ENCODE measurements at regions of chr11 and their contacts with region 1.

Region 1: DNA sequence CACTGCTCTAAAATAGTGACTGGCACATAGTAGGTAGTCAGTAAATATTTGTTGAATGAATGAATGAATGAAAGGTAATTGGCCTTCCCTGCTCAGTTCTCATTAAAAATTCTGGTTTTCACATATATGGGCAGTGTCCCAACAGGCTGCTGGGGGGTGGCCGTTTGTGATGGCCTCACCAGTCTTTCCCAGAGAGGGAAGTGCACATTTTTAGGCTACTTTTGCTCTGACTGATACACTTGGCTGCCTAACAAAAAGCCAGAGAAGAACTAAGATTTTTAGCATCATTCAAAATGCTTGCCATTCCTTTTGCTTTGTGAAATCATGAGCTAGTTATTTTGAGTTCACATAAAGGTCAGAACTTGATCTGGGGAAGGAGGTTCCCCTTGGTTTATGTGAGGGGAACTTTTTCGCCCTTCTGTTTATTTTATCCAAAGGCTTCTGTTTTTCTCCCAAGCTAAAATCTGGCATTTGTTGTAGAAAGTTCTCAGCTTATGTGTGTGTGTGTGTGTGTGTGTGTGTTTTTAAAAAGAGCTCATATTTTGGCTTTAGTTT is 83.1 kb downstream of the PTPRJ start:
- DNase-seq: peak; percentile 97
- H3K4me3 ChIP-seq: no peak overlapping the region
- H3K27ac ChIP-seq: peak overlapping the region; percentile 94
- H3K27me3 ChIP-seq: no peaks in the 10 kb centered on the region
- CTCF ChIP-seq: no peak

Region 2: GRCh38 chr11:47924184-47924691 is 139.3 kb before region 1 on chr11:
- CTCF ChIA-PET with region 1: no interaction called
- POLR2A ChIA-PET with region 1: interaction called, 10 read pairs
- DNase-seq: no peak
- H3K4me3 ChIP-seq: no peak overlapping the region
- H3K27ac ChIP-seq: peak overlapping the region; percentile 73
- H3K27me3 ChIP-seq: no peaks in the 10 kb centered on the region
- CTCF ChIP-seq: no peak

Region 3: DNA sequence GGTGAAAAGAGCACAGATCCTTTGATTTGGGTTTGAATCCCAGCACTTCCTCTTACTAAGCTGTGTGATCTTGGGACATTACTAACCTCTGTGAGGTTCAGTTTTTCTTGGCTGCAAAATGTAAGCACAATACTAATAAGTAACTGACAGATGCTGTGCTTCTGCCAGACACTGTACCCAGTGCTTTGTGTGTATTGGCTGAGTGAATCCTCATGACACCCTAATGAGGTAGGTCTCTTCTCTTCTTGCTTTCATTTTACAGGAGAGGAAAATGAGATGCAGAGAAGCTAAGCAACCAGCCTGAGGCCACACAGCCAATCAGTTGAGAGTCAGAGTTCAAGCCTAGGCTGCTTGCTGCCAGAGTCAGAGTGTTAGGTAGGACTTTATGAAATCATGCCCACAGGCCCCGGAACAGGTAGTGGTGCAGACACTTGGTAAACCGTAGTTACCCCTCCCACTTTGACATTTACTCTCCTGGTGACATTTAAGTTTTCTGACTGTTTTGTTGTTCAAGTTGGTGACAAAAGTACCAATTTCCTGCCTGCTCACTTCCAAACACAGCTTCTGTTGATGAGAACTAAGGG is 62.0 kb before region 1 on chr11:
- CTCF ChIA-PET with region 1: no interaction called
- POLR2A ChIA-PET with region 1: interaction called, 12 read pairs
- DNase-seq: peak; percentile 63
- H3K4me3 ChIP-seq: no peak overlapping the region
- H3K27ac ChIP-seq: peak overlapping the region; percentile 39
- H3K27me3 ChIP-seq: no peaks in the 10 kb centered on the region
- CTCF ChIP-seq: no peak

Region 4: DNA sequence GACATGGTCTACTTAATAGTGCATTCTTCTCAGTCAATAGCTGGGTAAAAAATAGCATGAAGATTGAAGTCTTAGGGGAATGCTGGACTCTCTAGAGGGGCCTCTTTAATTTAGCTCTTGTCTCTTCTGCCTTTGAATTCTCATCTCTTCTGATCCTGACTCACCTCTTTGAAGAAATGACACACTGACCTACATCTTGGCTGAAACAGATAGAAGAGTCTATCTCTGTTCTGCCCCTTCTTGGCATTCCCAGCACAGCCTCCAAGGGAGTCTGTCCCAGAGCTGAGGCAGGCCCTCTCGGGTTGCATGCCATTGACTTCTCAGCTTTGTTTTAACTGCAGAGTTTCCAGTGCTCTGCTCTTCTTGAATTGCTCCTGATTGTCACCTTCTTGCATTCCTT is 27.5 kb before region 1 on chr11:
- CTCF ChIA-PET with region 1: no interaction called
- POLR2A ChIA-PET with region 1: no interaction called
- DNase-seq: no peak
- H3K4me3 ChIP-seq: no peak overlapping the region
- H3K27ac ChIP-seq: no peak overlapping the region
- H3K27me3 ChIP-seq: no peaks in the 10 kb centered on the region
- CTCF ChIP-seq: no peak

Region 5: GRCh38 chr11:48052183-48053045 is 11.1 kb before region 1 on chr11:
- CTCF ChIA-PET with region 1: no interaction called
- POLR2A ChIA-PET with region 1: interaction called, 11 read pairs
- DNase-seq: peak; percentile 47
- H3K4me3 ChIP-seq: no peak overlapping the region
- H3K27ac ChIP-seq: peak overlapping the region; percentile 75
- H3K27me3 ChIP-seq: no peaks in the 10 kb centered on the region
- CTCF ChIP-seq: no peak

Region 6: GRCh38 chr11:48172818-48173609 is 109.5 kb after region 1 on chr11:
- CTCF ChIA-PET with region 1: no interaction called
- POLR2A ChIA-PET with region 1: no interaction called
- DNase-seq: peak; percentile 39
- H3K4me3 ChIP-seq: peak overlapping the region; percentile 5; the same call in 1 of the 2 replicates
- H3K27ac ChIP-seq: no peak overlapping the region
- H3K27me3 ChIP-seq: peaks cover 4% of the 10 kb centered on the region
- CTCF ChIP-seq: peak; percentile 99